ENCODE measurements at regions of chr10 and their contacts with region 1.

Region 1: GRCh38 chr10:3942937-3943489 is 158.0 kb upstream of the KLF6 start:
- DNase-seq: no peak
- H3K4me3 ChIP-seq: no peak overlapping the region
- CTCF ChIP-seq: no peak

Region 2: DNA sequence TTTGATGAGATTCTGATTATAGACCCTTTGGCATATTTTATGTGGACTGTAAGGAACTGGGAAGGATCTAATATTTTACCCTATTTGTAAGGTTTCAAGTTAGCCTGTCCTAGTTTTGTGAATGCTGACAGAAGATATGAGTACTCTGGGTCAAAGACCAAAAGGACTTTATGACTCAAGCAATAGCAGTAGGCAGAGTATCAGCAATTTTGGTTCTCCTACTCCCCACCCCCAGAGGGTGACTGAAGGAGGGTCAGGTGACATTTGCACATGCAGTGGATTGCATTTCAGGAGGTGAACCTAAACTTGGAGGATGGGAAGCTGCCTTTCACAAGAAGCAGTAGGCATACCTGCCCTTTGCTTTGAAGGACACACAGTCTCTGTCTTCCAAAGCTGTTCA is 74.0 kb before region 1 on chr10:
- in situ Hi-C with region 1: loop called (anchors 5 kb)
- DNase-seq: no peak
- H3K4me3 ChIP-seq: no peak overlapping the region
- CTCF ChIP-seq: no peak

Region 3: DNA sequence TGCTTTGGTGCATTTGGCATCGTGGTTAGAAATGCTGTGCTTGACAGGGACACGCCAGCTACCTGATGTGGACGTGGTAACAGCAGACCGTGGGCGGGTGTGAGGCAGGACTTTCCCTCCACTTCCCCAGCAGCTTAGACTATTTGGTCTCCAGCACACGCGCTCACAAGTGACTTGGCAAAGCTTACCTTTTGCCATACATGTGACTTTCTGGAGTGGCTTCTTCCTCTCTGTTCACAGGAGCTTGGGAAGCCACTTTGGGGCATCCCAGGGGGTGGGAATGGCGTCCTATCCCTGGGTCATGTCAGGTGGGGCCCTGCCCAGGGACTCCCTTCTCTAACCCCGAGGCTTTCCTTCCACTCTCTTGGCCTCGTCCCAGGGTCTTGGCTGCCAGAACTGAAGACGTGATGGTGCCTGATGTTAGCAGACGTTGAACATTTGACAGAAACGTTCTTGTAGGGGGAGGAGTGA is 70.7 kb after region 1 on chr10:
- in situ Hi-C with region 1: no loop called
- DNase-seq: no peak
- H3K4me3 ChIP-seq: no peak overlapping the region
- CTCF ChIP-seq: no peak

Measured in astrocyte of the cerebellum (primary cell).